BJ (cell line): ENCODE measurements at regions of chr1 and their contacts with region 1.

Region 1: DNA sequence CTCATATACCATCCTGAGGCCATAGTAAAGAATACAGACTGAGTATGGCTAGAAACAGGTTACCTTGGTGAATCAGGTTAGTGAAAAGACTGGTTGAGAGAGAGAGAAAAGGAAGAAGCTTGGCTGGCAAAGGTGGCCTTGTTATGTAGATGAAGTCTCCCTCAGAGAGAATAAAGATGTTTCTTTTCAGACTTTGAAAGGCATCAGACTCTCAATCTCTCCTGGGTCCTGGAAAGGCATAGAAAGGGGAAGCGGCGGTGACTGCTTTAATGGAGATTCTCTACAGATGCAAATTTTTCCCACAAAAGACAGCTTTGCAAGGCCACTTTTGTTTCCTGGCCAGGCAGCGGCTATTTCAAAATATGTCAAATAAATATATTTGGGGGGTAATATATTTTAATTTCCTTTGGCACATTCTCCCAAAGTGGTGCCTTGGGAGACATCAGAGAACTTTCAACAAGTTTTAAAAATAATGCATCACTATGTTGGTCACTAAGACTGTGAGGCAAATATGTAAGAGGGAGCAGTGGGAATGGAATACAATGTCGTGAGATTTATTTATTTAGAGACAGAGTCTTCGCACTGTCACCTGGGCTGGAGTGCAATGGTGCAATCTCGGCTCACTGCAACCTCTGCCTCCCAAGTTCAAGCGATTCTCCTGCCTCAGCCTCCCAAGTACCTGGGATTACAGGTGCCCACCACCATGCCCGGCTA is 46.1 kb downstream of the NPHS2 start:
- DNase-seq: no peak
- H3K4me3 ChIP-seq: no peak overlapping the region
- H3K27me3 ChIP-seq: no peaks in the 10 kb centered on the region
- CTCF ChIP-seq: no peak

Region 2: GRCh38 chr1:179545321-179545720 is 15.7 kb after region 1 on chr1:
- CTCF ChIA-PET with region 1: no interaction called
- POLR2A ChIA-PET with region 1: no interaction called
- DNase-seq: no peak
- H3K4me3 ChIP-seq: no peak overlapping the region
- H3K27me3 ChIP-seq: no peaks in the 10 kb centered on the region
- CTCF ChIP-seq: no peak

Region 3: GRCh38 chr1:179591592-179592471 is 62.2 kb after region 1 on chr1 and contains the start of gene TDRD5:
- CTCF ChIA-PET with region 1: no interaction called
- POLR2A ChIA-PET with region 1: interaction called, 29 read pairs
- DNase-seq: no peak
- H3K4me3 ChIP-seq: no peak within 1 kb of the TSS; the same call in 1 of the 2 replicates
- H3K27me3 ChIP-seq: peaks cover 6% of the 10 kb centered on the region
- CTCF ChIP-seq: no peak
- polyA plus RNA-seq, gene TDRD5: not detected in 2 replicates